ENCODE measurements at regions of chr3 and their contacts with region 1.

Region 1: DNA sequence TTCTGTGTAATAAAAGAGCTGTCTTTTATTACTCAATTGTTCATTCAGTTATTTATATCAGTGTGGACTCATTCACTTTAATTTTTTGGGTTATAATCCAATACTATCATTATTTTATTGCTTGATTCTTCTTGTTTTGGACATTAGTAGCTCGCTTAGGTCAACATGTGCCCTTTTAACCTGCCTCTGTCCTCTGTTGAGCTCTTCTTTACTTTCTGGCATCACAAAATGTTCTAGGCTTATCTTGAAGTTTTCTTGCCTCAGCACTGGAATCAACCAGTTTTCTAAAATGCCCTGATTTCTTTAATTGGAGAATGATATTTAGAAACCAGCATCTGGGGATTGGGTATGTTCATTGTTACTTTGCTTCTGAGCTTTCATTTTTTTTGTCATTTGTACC is 82.2 kb downstream of the LEKR1 start:
- DNase-seq: no peak
- H3K4me3 Mint-ChIP-seq: no peak overlapping the region
- H3K27ac Mint-ChIP-seq: no peak overlapping the region
- H3K4me1 Mint-ChIP-seq: no peaks in the 10 kb centered on the region
- H3K27me3 Mint-ChIP-seq: no peaks in the 10 kb centered on the region
- CTCF ChIP-seq: no peak

Region 2: GRCh38 chr3:156923349-156923748 is 15.0 kb after region 1 on chr3:
- CTCF ChIA-PET with region 1: no interaction called
- intact Hi-C with region 1: loop called (anchors 2 kb)
- DNase-seq: no peak
- H3K4me3 Mint-ChIP-seq: no peak overlapping the region
- H3K27ac Mint-ChIP-seq: no peak overlapping the region
- H3K4me1 Mint-ChIP-seq: no peaks in the 10 kb centered on the region
- H3K27me3 Mint-ChIP-seq: no peaks in the 10 kb centered on the region
- CTCF ChIP-seq: no peak

Region 3: DNA sequence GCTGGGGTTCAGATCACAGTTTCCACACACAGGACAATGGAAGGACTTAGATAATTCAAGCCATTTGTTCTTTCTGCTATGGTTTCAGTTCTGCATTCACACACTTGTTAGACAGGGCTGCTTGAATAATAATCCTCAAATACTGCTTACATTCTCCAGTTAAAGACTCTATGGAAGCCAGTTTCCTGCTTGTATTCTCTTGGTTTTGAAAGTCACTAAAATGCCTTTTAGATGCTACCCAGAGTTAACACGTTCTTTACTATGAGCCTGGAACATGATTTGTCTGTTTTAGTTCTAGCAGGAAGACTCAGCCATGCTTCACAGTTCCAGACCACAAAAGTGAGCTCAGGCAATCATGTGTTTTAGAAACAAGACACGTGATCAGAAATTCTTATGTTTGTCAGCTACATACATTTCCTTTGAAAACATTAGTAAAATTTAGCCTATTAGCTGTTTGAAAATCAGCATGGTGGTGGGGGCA is 70.1 kb after region 1 on chr3:
- CTCF ChIA-PET with region 1: no interaction called
- intact Hi-C with region 1: no loop called
- DNase-seq: no peak
- H3K4me3 Mint-ChIP-seq: no peak overlapping the region
- H3K27ac Mint-ChIP-seq: no peak overlapping the region
- H3K4me1 Mint-ChIP-seq: no peaks in the 10 kb centered on the region
- H3K27me3 Mint-ChIP-seq: no peaks in the 10 kb centered on the region
- CTCF ChIP-seq: no peak

Region 4: GRCh38 chr3:157248590-157249422 is 340.4 kb after region 1 on chr3:
- CTCF ChIA-PET with region 1: no interaction called
- intact Hi-C with region 1: no loop called
- DNase-seq: peak; percentile 67
- H3K4me3 Mint-ChIP-seq: no peak overlapping the region
- H3K27ac Mint-ChIP-seq: peak overlapping the region; percentile 21
- H3K4me1 Mint-ChIP-seq: peaks cover 19% of the 10 kb centered on the region
- H3K27me3 Mint-ChIP-seq: no peaks in the 10 kb centered on the region
- CTCF ChIP-seq: no peak

Region 5: DNA sequence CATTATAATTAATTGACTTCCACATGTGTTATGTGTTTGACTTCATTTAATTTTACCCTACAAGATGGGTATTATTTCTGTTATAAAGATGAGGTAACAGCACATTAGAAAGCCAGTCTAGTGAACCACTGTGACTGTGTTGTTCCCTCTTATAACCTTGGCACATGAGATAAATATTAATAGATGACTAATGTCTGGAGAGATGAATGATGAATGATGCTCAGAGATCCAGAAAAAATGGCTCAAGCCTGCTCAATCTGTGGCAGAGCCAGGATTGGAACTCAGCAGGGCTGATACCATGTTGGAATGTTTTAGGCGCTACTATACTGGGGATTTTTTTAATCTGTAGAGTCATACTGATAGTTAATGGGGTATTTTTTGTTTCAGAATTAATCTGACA is 409.5 kb after region 1 on chr3:
- CTCF ChIA-PET with region 1: no interaction called
- intact Hi-C with region 1: no loop called
- DNase-seq: no peak
- H3K4me3 Mint-ChIP-seq: peak overlapping the region; percentile 4
- H3K27ac Mint-ChIP-seq: peak overlapping the region; percentile 60
- H3K4me1 Mint-ChIP-seq: peaks cover 33% of the 10 kb centered on the region
- H3K27me3 Mint-ChIP-seq: no peaks in the 10 kb centered on the region
- CTCF ChIP-seq: no peak